HCT116 (cell line): ENCODE measurements at regions of chr4 and their contacts with region 1.

Region 1: GRCh38 chr4:137819964-137820383 is 287.7 kb upstream of the PCDH18 start:
- DNase-seq: peak; percentile 50
- ATAC-seq: peak; percentile 99
- H3K4me3 ChIP-seq: no peak overlapping the region
- H3K27ac ChIP-seq: no peak overlapping the region
- H3K4me1 ChIP-seq: no peaks in the 10 kb centered on the region
- H3K27me3 ChIP-seq: no peaks in the 10 kb centered on the region
- CTCF ChIP-seq: peak; percentile 67 to 78 (median 72)
- POLR2A ChIP-seq: no peak
- RAD21 ChIP-seq: peak; percentile 92

Region 2: DNA sequence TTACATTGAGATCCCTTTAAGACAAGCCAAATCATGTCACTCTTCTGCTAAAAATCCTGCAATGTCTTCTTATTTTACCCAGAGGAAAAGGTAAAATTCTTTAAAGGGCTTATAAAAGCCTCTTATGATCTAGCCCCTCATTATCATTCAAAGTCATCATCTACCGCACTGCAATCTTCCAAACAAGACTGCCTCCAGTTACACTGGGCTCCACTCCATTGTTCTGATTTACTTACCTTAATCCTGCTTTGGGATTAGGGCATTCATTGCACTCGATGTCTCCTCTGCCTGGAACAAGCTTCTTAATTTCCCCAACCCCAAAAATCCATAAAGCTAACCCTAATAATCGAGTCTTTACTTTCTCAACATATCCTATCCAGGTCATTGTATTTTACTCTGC is 556.8 kb before region 1 on chr4:
- CTCF ChIA-PET with region 1: no interaction called
- POLR2A ChIA-PET with region 1: no interaction called
- RAD21 ChIA-PET with region 1: no interaction called
- intact Hi-C with region 1: no loop called
- DNase-seq: no peak
- ATAC-seq: no peak
- H3K4me3 ChIP-seq: no peak overlapping the region
- H3K27ac ChIP-seq: no peak overlapping the region
- H3K4me1 ChIP-seq: peaks cover 0 to 7% of the 10 kb centered on the region in 2 experiments; a peak in 2 of 4 replicates
- H3K27me3 ChIP-seq: no peaks in the 10 kb centered on the region
- CTCF ChIP-seq: no peak
- POLR2A ChIP-seq: no peak
- RAD21 ChIP-seq: no peak

Region 3: DNA sequence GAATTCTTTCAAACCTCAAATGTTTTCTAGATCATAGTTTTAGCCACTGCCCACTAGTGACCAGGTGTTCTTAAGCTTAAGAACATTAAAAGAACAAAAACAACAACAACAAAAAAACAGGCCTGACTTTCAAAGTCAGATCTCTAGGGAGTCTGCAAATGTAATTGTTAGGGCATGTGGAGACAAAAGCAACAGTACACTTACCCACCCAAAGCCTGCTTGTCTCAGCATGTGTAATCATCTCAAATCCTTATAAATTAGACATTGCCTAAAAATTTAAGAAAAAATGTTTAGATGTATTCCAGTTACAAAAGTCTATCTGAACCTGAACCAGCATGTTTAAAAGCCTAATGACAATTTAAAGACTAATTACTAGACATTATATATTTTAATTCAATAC is 342.3 kb after region 1 on chr4:
- CTCF ChIA-PET with region 1: no interaction called
- POLR2A ChIA-PET with region 1: no interaction called
- RAD21 ChIA-PET with region 1: no interaction called
- intact Hi-C with region 1: loop called (anchors 5 kb)
- DNase-seq: no peak
- ATAC-seq: no peak
- H3K4me3 ChIP-seq: no peak overlapping the region
- H3K27ac ChIP-seq: no peak overlapping the region
- H3K4me1 ChIP-seq: peaks cover 0 to 8% of the 10 kb centered on the region in 2 experiments; a peak in 1 of 4 replicates
- H3K27me3 ChIP-seq: no peaks in the 10 kb centered on the region
- CTCF ChIP-seq: no peak
- POLR2A ChIP-seq: no peak
- RAD21 ChIP-seq: no peak

Region 4: DNA sequence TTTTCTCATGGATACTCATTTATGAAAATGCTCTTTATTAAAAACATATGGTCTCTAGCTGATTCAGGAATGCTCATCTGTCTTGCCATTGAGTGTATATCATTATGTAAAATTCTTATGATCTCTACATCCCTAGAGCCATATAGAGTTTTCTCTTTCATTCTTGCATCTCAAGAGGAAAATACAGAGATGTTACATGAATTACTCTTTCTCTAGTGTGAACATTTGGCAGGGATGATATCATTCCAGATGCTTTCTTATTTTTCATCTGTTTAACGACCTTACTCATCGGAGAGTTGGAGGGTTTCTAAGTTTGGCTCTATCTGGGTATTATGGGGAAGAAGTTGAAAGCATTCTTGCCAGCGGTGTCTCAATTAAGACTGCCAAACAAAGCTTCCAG is 625.1 kb after region 1 on chr4:
- CTCF ChIA-PET with region 1: no interaction called
- POLR2A ChIA-PET with region 1: no interaction called
- RAD21 ChIA-PET with region 1: no interaction called
- intact Hi-C with region 1: no loop called
- DNase-seq: no peak
- ATAC-seq: no peak
- H3K4me3 ChIP-seq: no peak overlapping the region
- H3K27ac ChIP-seq: no peak overlapping the region
- H3K4me1 ChIP-seq: no peaks in the 10 kb centered on the region
- H3K27me3 ChIP-seq: no peaks in the 10 kb centered on the region
- CTCF ChIP-seq: no peak
- POLR2A ChIP-seq: no peak
- RAD21 ChIP-seq: no peak

Region 5: GRCh38 chr4:138576684-138577083 is 756.7 kb after region 1 on chr4:
- CTCF ChIA-PET with region 1: interaction called, 5 read pairs
- POLR2A ChIA-PET with region 1: no interaction called
- RAD21 ChIA-PET with region 1: no interaction called
- intact Hi-C with region 1: loop called (anchors 1 kb)
- DNase-seq: peak; percentile 64
- ATAC-seq: peak; percentile 89
- H3K4me3 ChIP-seq: no peak overlapping the region
- H3K27ac ChIP-seq: no peak overlapping the region
- H3K4me1 ChIP-seq: no peaks in the 10 kb centered on the region
- H3K27me3 ChIP-seq: no peaks in the 10 kb centered on the region
- CTCF ChIP-seq: peak; percentile 56 to 81 (median 62); a peak in 5 of 6 replicates
- POLR2A ChIP-seq: no peak
- RAD21 ChIP-seq: peak; percentile 88

Region 6: GRCh38 chr4:138627096-138627495 is 807.1 kb after region 1 on chr4:
- CTCF ChIA-PET with region 1: no interaction called
- POLR2A ChIA-PET with region 1: no interaction called
- RAD21 ChIA-PET with region 1: no interaction called
- intact Hi-C with region 1: no loop called
- DNase-seq: no peak
- ATAC-seq: peak; percentile 47; the same call in 1 of the 2 replicates
- H3K4me3 ChIP-seq: no peak overlapping the region
- H3K27ac ChIP-seq: no peak overlapping the region
- H3K4me1 ChIP-seq: peaks cover 0 to 6% of the 10 kb centered on the region in 2 experiments; a peak in 1 of 4 replicates
- H3K27me3 ChIP-seq: no peaks in the 10 kb centered on the region
- CTCF ChIP-seq: no peak
- POLR2A ChIP-seq: no peak
- RAD21 ChIP-seq: no peak

Region 7: DNA sequence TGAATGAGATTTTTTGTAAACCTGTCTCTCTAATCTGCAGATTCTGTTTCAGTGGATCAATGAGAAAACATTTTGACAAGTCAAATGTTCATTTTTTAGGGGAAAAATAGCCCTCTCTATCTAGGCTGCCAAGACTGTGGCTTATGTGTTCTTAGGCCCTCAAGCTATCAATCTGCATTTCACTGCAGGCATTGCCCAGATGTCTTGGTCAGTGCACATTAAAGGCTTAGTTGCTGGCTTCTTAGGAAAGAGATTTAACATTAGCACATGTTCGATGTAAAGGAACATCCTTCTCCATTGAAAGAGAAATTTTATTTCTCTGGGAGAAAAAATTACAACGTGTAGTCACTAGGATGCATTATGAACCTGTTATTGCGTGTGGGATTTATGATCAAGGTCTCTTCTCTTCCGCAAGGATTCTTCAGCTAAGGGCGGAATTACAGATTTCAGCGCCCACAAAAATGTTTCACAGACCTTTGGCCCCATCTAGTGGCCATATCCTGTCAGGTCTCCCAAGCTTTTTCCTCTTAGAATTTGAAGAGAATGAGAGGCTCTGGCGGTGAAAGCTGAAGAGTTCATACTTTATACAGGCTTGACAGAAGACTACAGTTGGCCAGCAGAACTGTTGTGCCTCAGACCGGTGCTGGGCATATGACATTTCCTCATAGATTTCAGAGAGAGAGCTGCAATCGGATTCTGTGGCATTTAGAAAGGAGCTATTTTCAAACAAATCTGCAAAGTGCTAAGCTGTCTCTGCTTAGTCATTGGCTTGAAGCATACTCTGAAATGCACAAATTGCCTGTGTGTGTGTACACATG is 1051.0 kb after region 1 on chr4:
- CTCF ChIA-PET with region 1: interaction called, 18 read pairs
- POLR2A ChIA-PET with region 1: no interaction called
- RAD21 ChIA-PET with region 1: interaction called in 1 of 2 experiments, 4 read pairs
- intact Hi-C with region 1: loop called (anchors 1 kb)
- DNase-seq: peak; percentile 65
- ATAC-seq: peak; percentile 82
- H3K4me3 ChIP-seq: no peak overlapping the region
- H3K27ac ChIP-seq: no peak overlapping the region
- H3K4me1 ChIP-seq: peaks cover 0 to 9% of the 10 kb centered on the region in 2 experiments; a peak in 1 of 4 replicates
- H3K27me3 ChIP-seq: peaks cover 6% of the 10 kb centered on the region; the same call in 1 of the 2 replicates
- CTCF ChIP-seq: peak; percentile 71 to 87 (median 81)
- POLR2A ChIP-seq: no peak
- RAD21 ChIP-seq: peak; percentile 94